CD4-positive, alpha-beta T cell (primary cell): ENCODE measurements at regions of chr15 and their contacts with region 1.

Region 1: DNA sequence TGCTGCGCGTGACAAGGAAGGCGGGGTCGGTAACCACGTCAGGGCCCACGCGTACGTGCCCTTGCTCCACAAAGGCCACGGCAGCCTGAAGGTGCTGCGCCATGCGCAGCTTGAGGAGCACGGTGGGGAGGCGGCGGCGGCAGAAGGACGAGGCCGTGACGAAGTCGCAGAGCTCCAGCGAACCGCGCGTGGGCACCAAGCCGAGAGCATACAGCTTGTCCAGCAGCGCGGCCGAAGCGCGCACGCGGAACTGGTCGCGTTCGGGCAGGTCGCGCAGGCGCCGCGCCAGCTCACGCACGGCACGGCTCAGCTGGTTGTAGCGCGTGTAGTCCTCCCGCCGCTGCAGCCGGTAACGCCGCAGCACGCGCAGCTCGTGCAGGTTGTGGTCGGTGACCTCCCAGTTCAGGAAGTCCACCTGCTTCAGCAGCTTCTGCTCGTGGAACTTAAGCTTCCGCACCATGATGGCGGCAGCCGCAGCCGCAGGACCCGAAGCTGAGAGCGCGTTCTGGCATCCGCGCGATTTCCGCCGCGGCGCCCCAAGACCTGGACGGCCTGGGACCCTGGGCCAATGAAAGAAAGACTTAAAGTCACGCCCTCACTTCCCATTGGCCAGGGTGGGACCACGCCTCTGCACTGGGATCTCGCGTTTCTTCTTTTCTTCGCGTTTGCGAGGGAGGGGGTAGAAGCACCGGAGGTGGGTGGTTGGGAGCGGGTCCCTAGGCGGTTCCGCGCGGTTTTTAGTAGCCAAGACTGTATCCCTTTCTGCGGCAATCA is at the start of gene IMP3:
- DNase-seq: peak; percentile 84 to 97 (median 90)
- ATAC-seq: peak; percentile 90
- H3K4me3 ChIP-seq: peak within 1 kb of the TSS; percentile 95
- H3K4me3 Mint-ChIP-seq: peak within 1 kb of the TSS; percentile 89
- H3K27ac ChIP-seq: peak within 1 kb of the TSS; percentile 92
- H3K27ac Mint-ChIP-seq: peak within 1 kb of the TSS; percentile 85
- H3K4me1 ChIP-seq: peaks cover 56% of the 10 kb centered on the region
- H3K4me1 Mint-ChIP-seq: peaks cover 35% of the 10 kb centered on the region
- H3K27me3 ChIP-seq: no peaks in the 10 kb centered on the region
- H3K27me3 Mint-ChIP-seq: no peaks in the 10 kb centered on the region
- CTCF ChIP-seq: no peak
- total RNA-seq, gene IMP3: 48.4 to 50.4 TPM

Region 2: GRCh38 chr15:75347222-75347878 is 292.5 kb before region 1 on chr15:
- CTCF ChIA-PET with region 1: no interaction called
- POLR2A ChIA-PET with region 1: interaction called, 14 read pairs
- intact Hi-C with region 1: no loop called
- DNase-seq: peak; percentile 31 to 83 (median 57)
- ATAC-seq: peak; percentile 67
- H3K4me3 ChIP-seq: peak overlapping the region; percentile 86
- H3K4me3 Mint-ChIP-seq: peak overlapping the region; percentile 89
- H3K27ac ChIP-seq: peak overlapping the region in 1 of 2 donors; percentile 43
- H3K27ac Mint-ChIP-seq: peak overlapping the region; percentile 83
- H3K4me1 ChIP-seq: peaks cover 51% of the 10 kb centered on the region
- H3K4me1 Mint-ChIP-seq: peaks cover 35% of the 10 kb centered on the region
- H3K27me3 ChIP-seq: no peaks in the 10 kb centered on the region
- H3K27me3 Mint-ChIP-seq: no peaks in the 10 kb centered on the region
- CTCF ChIP-seq: no peak

Region 3: DNA sequence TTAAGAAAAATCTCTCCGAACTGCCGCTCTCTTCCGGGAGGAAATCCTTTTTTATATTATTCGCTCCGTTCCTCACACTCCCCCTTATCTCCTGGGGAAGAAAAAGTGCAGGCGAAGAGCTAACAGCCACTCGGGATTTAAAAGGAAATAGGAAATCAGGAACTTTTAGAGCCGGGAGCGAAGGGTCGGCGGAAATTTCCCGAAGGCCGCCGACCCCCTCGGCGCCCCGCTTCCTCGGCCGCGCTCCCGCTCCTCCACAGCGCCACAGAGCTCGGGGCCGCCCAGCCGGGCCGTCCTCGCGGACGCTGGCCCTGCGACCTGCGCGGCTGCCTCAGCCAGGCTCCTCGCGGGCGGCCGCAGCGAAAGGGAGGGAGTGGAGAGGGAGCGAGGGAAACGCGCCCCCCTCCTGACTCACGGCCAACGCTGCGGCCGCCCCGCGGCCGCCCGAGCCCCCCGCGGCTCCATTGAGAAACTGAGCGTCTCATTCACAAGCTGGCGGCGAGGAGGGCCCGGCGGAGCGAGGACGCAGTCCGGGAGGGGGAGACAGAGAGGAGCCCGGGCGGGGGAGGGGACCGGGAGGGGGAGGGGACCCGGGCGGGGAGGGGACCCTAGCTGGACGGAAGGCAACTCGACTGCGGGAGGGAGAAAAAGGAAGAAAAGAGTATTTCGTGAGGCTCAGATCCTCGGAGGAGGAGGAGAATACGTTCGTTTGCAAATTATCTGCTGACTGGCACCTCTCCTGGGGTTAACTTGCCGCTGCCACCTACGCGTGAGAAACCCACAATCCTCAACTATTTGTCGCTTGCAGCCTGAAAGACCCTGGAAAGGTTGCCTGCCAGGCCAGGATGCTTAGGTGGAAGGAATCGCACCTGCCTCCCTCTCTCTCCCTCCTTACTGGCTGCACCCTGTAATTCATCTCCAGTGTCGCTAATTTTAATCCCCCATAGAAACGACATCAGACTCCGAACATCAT is 60.7 kb before region 1 on chr15 and contains the start of gene PTPN9:
- CTCF ChIA-PET with region 1: interaction called, 15 read pairs
- POLR2A ChIA-PET with region 1: interaction called, 59 read pairs
- intact Hi-C with region 1: loop called (anchors 2 kb)
- DNase-seq: peak; percentile 46 to 82 (median 64)
- ATAC-seq: peak; percentile 82
- H3K4me3 ChIP-seq: peak within 1 kb of the TSS; percentile 79
- H3K4me3 Mint-ChIP-seq: peak within 1 kb of the TSS; percentile 97
- H3K27ac ChIP-seq: peak within 1 kb of the TSS; percentile 50 to 70
- H3K27ac Mint-ChIP-seq: peak within 1 kb of the TSS; percentile 82
- H3K4me1 ChIP-seq: peaks cover 22% of the 10 kb centered on the region
- H3K4me1 Mint-ChIP-seq: peaks cover 26% of the 10 kb centered on the region
- H3K27me3 ChIP-seq: no peaks in the 10 kb centered on the region
- H3K27me3 Mint-ChIP-seq: no peaks in the 10 kb centered on the region
- CTCF ChIP-seq: peak; percentile 66
- total RNA-seq, gene PTPN9: 8.1 to 8.2 TPM

Region 4: DNA sequence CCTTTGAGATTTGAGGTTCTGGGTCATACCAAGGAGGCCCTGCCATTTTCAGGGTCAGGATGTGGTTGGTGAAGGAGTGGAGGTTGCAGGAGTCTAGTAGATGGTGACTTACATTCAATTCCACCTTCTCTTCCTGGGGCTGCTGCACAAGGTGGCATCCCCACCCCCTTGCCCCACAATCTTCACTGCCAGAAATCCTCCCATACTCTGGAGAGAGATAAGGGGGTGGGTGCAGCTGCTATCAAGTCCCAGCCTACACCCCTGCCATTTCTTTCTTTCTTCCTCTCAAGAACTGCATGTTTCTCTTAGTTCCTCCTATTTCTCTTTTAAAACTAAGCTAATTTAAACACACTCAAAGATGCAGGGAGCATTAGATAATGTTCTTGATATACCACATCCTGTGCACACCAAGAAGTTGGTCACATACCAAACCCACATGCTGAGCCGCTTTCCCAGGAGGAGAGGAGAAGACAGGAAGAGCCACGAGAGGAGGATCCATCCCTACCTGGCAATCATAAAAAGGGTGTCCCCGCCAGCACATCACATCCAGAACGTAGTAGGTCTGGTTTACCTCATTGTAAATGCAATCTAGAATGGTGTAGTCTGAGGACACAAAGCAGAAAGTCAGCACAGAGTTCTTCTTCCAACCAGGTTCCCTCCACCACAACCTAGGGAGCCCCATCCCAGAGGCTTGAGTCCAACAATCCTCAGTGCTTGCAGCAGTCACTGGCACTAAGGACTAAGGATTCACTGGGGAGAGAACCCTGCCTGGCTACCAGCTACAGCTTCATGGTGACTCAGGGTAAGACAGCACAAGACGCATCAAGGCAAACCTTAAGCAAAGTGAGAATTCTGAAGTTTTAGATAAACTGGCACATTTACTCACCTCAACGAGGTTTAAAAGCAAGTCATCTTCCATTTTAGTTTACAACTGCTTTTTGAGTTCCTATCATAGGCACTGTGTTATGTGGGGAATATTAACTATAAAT is 32.9 kb before region 1 on chr15:
- CTCF ChIA-PET with region 1: interaction called, 4 read pairs
- POLR2A ChIA-PET with region 1: interaction called, 48 read pairs
- intact Hi-C with region 1: no loop called
- DNase-seq: peak in 8 of 14 experiments; percentile 6 to 77 (median 24)
- ATAC-seq: peak; percentile 75
- H3K4me3 ChIP-seq: peak overlapping the region; percentile 34
- H3K4me3 Mint-ChIP-seq: peak overlapping the region; percentile 68
- H3K27ac ChIP-seq: peak overlapping the region; percentile 44 to 63
- H3K27ac Mint-ChIP-seq: peak overlapping the region; percentile 76
- H3K4me1 ChIP-seq: peaks cover 48% of the 10 kb centered on the region
- H3K4me1 Mint-ChIP-seq: peaks cover 45% of the 10 kb centered on the region
- H3K27me3 ChIP-seq: no peaks in the 10 kb centered on the region
- H3K27me3 Mint-ChIP-seq: no peaks in the 10 kb centered on the region
- CTCF ChIP-seq: no peak